ENCODE measurements at regions of chr6 and their contacts with region 1.

Region 1: DNA sequence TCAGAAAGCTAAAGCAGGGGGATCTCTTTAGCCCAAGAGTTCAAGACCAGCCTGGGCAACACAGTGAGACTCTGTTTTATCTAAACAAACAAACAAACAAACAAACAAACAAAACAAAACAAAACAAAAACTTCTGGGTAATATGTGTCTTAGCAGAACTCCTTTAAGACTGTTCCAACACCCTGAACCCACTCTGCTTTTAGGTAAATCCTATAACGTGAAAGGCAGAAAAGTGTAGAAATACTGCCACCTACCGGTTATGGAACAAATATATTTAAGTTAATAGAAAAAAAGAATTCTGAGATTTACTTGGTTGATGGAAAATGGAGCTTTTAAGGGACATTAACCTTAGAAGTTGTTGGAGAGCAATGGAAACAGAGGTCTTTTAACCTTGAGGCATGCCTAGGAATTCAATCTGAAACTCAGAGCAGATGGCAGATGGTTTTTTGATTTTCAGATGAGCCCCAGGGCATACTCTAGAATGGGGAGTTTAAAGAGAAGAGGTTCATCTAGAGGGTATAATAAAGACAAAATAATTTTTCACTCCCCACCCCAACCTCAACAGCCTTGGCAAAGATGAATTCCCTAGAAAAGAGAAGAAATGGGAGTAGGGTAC is 38.5 kb downstream of the SOD2 start:
- DNase-seq: peak; percentile 32
- H3K4me3 ChIP-seq: no peak overlapping the region
- H3K27ac ChIP-seq: no peak overlapping the region
- H3K27me3 ChIP-seq: no peaks in the 10 kb centered on the region
- CTCF ChIP-seq: peak; percentile 52

Region 2: DNA sequence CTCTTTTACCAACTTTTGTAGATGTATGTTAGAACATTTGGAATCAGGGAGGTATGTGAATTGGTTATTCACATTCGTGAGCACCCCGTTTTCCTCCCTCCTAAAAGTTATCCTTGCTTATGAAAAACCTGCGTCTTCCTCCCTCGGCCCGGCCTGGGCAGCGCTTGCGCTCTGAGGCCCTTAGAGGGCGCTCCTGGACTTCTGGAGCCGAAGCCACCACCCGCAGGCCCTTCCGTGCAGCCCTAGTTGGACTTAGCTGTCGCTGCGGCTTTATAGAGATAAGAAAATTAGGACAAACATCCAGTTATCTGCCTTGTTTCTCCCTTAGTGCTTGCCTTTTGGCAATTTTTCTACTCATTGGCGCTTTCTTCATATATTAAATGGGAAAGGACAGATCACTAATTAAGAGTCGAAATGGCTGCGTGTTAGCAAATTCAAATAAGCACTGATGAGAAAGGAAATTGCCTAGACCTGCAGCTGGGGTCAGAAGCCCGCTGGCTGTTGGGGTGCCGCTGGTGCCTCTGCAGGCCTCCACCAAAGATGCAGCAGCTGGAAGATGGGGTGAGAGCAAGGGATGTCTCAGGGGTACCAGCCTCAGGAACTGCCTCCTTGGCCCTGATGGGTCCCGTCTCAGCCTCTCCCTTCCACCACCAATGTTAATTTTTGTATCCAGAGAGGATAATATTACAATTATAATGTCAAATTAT is 480.2 kb before region 1 on chr6:
- CTCF ChIA-PET with region 1: interaction called, 94 read pairs
- POLR2A ChIA-PET with region 1: no interaction called
- DNase-seq: peak; percentile 18
- H3K4me3 ChIP-seq: no peak overlapping the region
- H3K27ac ChIP-seq: no peak overlapping the region
- H3K27me3 ChIP-seq: peaks cover 31% of the 10 kb centered on the region
- CTCF ChIP-seq: peak; percentile 99

Region 3: DNA sequence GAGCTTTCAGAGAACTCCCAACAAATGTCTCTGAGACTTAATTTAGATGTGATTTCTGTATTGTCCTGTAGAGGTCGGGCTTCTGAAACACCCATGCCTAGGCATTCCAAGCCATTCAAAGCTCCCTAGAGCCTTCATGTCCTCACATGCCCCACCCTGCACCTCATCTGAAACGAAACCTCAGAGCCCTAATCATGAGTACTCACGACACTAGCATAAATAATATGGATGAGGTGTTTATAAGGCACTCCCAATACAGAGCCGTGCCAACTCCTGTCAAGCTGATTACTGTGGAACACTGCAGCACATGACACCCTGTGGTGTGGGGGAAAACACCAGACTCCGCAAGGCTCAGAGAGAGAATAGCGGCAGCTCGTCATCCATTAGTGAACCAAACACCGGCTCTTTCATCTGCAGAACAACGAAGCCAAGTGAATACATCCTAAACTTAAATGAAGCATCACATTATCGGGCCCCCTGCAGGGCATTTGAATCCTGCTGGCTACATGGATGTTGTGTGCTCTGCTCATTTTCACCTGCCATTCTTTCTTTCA is 401.6 kb before region 1 on chr6:
- CTCF ChIA-PET with region 1: interaction called, 80 read pairs
- POLR2A ChIA-PET with region 1: no interaction called
- DNase-seq: peak; percentile 4
- H3K4me3 ChIP-seq: no peak overlapping the region
- H3K27ac ChIP-seq: no peak overlapping the region
- H3K27me3 ChIP-seq: no peaks in the 10 kb centered on the region
- CTCF ChIP-seq: peak; percentile 62

Region 4: GRCh38 chr6:159665868-159666635 is 11.5 kb after region 1 on chr6:
- CTCF ChIA-PET with region 1: interaction called, 21 read pairs
- POLR2A ChIA-PET with region 1: no interaction called
- DNase-seq: no peak
- H3K4me3 ChIP-seq: no peak overlapping the region
- H3K27ac ChIP-seq: peak overlapping the region; percentile 31
- H3K27me3 ChIP-seq: no peaks in the 10 kb centered on the region
- CTCF ChIP-seq: no peak

Region 5: DNA sequence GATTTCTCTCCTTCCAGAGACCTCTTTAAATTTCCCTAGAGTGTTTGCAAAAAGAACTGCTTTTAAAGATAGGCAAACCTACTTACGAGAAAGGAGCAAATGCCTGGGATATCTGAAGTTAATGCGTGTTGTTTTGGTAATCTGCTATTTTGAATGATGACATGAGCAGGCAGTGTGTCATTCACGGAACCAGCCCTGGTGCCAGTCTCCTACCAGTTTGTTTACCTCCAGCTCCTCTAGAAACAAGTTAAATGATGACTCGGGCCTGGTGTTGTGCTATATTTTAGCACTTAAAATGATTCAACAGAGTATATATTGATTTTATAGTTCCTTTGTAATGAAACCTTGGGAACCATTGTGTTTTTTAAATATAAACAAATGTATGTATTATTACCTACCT is 1295.9 kb after region 1 on chr6:
- CTCF ChIA-PET with region 1: no interaction called
- POLR2A ChIA-PET with region 1: no interaction called
- DNase-seq: no peak
- H3K4me3 ChIP-seq: no peak overlapping the region
- H3K27ac ChIP-seq: no peak overlapping the region
- H3K27me3 ChIP-seq: peaks cover 6% of the 10 kb centered on the region
- CTCF ChIP-seq: no peak